Gastrocnemius medialis (tissue), 4 donors: ENCODE measurements at regions of chr20 and their contacts with region 1.

Region 1: DNA sequence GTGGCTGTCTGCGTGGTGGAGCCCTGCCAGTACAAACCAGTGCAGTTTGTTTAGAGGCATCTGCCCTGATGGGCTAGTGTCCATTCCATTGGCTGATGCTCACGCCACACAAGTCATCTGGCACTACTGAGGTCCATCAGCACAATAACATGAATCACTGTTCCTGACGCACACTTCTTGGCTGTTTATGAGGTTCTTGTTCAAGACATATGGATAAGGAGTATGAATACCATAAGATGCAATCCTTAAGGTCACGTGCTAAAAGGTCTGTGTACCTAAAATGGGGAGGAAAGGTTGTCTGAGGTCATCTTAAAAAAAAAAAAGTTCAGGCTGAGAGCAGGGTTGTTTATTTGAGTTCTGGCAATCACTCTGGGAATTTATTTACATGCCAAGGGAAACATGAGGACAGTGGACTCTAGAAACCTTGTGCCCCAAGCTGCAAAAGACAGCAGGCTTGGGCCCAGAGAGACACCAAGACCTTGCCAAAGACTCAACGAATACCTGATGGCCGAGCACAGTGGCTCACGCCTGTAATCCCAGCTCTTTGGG is 54.1 kb upstream of the SHLD1 start:
- DNase-seq: peak; percentile 34 to 62
- ATAC-seq: peak; percentile 94 to 97
- H3K4me3 ChIP-seq: no peak overlapping the region
- H3K27ac ChIP-seq: peak overlapping the region; percentile 50 to 68 (median 57)
- H3K4me1 ChIP-seq: peaks cover 4% of the 10 kb centered on the region in 2 donors
- H3K27me3 ChIP-seq: no peaks in the 10 kb centered on the region
- CTCF ChIP-seq: no peak
- POLR2A ChIP-seq: no peak

Region 2: GRCh38 chr20:5719861-5720401 is 23.8 kb after region 1 on chr20:
- in situ Hi-C with region 1: no loop called
- intact Hi-C with region 1: loop called (anchors 1 kb)
- DNase-seq: no peak
- ATAC-seq: no peak
- H3K4me3 ChIP-seq: no peak overlapping the region
- H3K27ac ChIP-seq: no peak overlapping the region
- H3K4me1 ChIP-seq: peaks cover 3 to 10% of the 10 kb centered on the region in 2 donors
- H3K27me3 ChIP-seq: no peaks in the 10 kb centered on the region
- CTCF ChIP-seq: no peak
- POLR2A ChIP-seq: no peak

Region 3: GRCh38 chr20:5766085-5766764 is 70.1 kb after region 1 on chr20:
- in situ Hi-C with region 1: no loop called
- intact Hi-C with region 1: loop called (anchors 5 kb)
- DNase-seq: peak; percentile 83 to 91
- ATAC-seq: peak; percentile 89 to 95
- H3K4me3 ChIP-seq: no peak overlapping the region
- H3K27ac ChIP-seq: peak overlapping the region; percentile 89 to 92 (median 90)
- H3K4me1 ChIP-seq: peaks cover 11 to 28% of the 10 kb centered on the region in 2 donors
- H3K27me3 ChIP-seq: no peaks in the 10 kb centered on the region
- CTCF ChIP-seq: no peak
- POLR2A ChIP-seq: peak in 1 of 2 donors; percentile 41

Region 4: DNA sequence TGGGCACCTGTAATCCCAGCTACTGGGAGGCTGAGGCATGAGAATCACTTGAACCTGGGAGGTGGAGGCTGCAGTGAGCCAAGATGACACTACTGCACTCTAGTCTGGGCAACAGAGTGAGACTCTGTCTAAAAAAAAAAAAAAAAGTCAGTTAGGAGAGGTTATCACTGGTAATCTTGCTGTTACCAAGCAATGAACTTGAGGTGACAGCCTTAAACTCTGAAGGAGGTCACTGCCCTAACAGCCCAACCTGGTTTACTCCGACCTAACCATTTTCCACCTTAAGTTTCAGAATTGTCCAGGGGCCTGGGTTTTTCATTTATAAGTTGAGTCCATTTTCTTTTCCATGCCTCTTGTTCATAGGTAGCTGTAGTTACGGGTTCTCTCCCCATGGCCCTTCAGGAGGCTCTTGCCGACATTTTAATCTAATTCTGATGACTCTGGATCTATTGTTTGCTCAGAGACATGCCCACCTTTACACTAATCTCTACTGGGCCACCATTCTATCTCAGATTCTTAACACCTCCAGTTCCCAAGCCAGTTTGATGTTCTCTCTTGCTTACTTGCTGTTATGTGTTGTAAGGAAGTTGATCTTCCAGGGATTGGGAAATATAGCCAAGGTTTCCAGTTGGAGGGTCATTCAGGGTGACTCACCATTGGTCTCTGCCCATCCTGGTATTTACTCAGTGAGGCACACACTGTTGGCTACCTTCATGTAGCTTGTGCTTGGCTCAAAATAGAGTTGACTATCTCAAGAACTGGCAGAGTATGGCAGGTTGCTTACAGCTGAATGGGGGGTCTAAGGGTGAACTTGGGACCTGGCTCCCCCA is 83.2 kb after region 1 on chr20:
- in situ Hi-C with region 1: no loop called
- intact Hi-C with region 1: loop called (anchors 5 kb)
- DNase-seq: peak; percentile 75 to 84
- ATAC-seq: peak; percentile 98 to 99
- H3K4me3 ChIP-seq: no peak overlapping the region
- H3K27ac ChIP-seq: peak overlapping the region; percentile 84 to 94 (median 89)
- H3K4me1 ChIP-seq: peaks cover 18 to 29% of the 10 kb centered on the region in 2 donors
- H3K27me3 ChIP-seq: no peaks in the 10 kb centered on the region
- CTCF ChIP-seq: no peak
- POLR2A ChIP-seq: peak in 1 of 2 donors; percentile 75

Region 5: DNA sequence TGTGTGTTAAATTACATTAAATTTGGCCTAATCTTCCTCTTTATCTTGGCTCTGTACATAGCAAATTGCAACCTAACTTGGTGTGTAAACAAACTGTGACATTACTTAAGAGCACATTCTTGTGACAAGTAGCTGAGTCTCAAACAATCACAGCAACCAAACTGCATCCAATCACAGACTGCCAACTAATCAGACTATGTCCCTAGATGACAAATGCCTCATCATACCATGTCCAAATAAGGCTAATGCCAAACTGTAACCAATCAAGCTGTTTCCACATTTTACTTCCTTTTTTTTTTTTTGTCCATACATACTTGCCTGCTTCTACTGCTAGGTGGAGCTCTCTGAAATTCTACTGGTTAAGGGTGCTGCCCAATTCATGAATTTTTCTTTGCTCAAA is 1280.4 kb after region 1 on chr20:
- in situ Hi-C with region 1: no loop called
- intact Hi-C with region 1: no loop called
- DNase-seq: no peak
- ATAC-seq: no peak
- H3K4me3 ChIP-seq: no peak overlapping the region
- H3K27ac ChIP-seq: no peak overlapping the region
- H3K4me1 ChIP-seq: no peaks in the 10 kb centered on the region
- H3K27me3 ChIP-seq: no peaks in the 10 kb centered on the region
- CTCF ChIP-seq: no peak
- POLR2A ChIP-seq: no peak